ENCODE measurements at regions of chr14 and their contacts with region 1.

Region 1: GRCh38 chr14:35533357-35534207 is at the start of gene INSM2:
- DNase-seq: peak; percentile 85
- ATAC-seq: peak; percentile 81
- H3K4me3 Mint-ChIP-seq: peak within 1 kb of the TSS; percentile 69
- H3K27ac Mint-ChIP-seq: no peak within 1 kb of the TSS
- H3K4me1 Mint-ChIP-seq: peaks cover 15% of the 10 kb centered on the region
- H3K27me3 Mint-ChIP-seq: peaks cover 44% of the 10 kb centered on the region
- total RNA-seq, gene INSM2: not detected

Region 2: DNA sequence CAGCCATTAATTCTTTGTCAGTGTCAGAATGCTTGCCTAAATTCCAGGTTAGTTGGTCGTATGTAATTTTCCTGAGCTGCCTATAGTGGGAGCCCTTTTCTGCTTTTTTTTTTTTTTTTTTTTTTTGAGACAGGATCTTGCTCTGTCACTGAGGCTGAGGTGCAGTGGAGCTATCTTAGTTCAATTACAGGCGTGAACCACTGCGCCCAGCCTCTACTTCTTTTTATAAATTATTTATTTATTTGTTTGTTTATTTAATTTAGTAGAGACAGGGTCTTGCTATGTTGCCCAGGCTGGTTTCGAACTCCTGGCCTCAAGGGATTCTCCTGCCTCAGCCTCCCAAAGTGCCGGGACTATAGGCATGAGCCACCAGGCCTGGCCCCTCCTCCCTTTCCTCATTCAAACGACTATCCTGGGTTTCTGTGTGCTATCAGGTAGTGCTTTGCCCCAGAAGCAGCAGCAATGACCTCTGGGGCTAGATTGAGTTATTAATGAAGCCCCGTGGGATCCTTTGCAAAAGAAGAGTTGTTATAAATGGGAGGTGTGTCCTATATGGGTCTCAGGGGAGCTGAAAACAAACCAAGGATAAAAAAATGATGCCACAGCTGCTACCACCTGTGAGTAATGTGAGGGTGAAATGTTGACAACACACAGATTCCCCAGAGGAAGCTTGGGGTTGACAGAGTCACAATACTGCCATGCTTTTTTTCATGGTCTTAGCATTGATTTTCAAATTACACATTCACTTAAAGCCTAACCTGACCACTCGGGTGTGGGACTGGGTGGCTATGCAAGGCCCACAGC is 94.5 kb before region 1 on chr14:
- CTCF ChIA-PET with region 1: no interaction called
- POLR2A ChIA-PET with region 1: no interaction called
- intact Hi-C with region 1: loop called in 1 of 2 experiments (anchors 5 kb)
- DNase-seq: no peak
- ATAC-seq: peak; percentile 49
- H3K4me3 Mint-ChIP-seq: no peak overlapping the region
- H3K27ac Mint-ChIP-seq: no peak overlapping the region
- H3K4me1 Mint-ChIP-seq: peaks cover 7% of the 10 kb centered on the region
- H3K27me3 Mint-ChIP-seq: no peaks in the 10 kb centered on the region

Region 3: DNA sequence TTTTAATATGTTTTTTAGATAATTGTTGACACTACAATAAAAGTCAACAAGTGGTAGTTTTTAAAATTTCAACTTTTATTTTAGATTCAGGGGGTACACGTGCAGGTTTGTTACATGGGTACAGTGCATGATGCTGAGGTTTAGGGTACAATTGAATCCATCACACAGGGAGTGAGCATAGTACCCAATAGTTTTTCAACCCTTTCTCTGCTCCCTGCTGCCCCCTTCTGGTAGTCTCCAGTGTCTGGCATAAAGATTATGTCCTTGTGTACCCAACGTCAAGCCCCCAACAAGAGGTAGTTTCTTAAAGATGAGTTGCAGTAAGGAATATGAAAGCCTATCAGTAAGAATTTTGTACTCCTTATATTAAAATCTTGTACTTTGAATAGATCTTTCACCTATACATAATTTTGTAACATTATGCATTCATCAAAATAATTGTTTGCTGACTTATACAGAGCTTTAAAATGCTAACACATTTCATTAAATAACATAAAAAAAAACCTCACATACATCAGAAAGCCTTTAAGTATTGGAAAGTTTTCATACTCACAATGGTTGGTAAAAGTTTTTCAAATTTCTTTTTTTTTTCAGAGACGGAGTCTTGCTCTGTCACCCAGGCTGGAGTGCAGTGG is 280.9 kb after region 1 on chr14:
- CTCF ChIA-PET with region 1: no interaction called
- POLR2A ChIA-PET with region 1: no interaction called
- intact Hi-C with region 1: loop called in 1 of 2 experiments (anchors 5 kb)
- DNase-seq: peak; percentile 90
- ATAC-seq: peak; percentile 89
- H3K4me3 Mint-ChIP-seq: no peak overlapping the region
- H3K27ac Mint-ChIP-seq: no peak overlapping the region
- H3K4me1 Mint-ChIP-seq: no peaks in the 10 kb centered on the region
- H3K27me3 Mint-ChIP-seq: no peaks in the 10 kb centered on the region

Measured in activated CD4-positive, alpha-beta T cell treated with anti-CD3 and anti-CD28 coated beads for 36 hours (primary cell).